ENCODE measurements at regions of chr2 and their contacts with region 1.

Region 1: DNA sequence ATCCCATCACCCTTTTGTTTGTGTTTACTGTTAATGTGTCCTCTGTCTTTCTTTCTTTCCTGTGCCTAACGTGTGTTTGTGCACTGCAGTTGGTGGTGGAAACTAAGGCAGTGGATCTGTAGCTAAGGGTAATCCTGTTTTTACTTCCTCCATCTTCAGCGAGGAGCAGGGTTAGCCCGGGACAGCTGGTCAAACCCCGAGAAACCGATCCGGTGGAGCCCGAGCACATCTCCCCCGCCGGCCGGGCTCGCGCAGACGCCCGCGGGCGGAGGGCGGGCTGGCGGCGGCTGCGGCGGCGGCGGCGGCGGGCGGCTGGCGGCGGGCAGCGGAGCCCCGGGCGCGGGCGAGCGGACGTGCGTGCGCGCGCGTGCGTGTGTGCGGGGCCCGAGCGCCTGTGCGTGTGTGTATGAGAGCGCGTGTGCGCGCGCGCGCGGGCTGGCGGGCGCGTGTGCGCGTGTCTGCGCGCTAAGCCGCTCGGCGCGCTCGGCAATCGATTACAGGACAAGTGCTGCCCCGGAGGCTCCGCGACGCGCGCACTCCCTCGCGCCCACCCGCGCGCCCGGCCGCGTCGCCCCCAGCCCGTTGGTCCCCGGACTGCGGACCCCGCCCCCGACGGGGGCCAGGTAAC is at the start of gene IKZF2:
- DNase-seq: peak; percentile 96
- H3K4me3 ChIP-seq: peak within 1 kb of the TSS; percentile 75
- H3K27ac ChIP-seq: peak within 1 kb of the TSS; percentile 88
- H3K4me1 ChIP-seq: peaks cover 29% of the 10 kb centered on the region
- H3K27me3 ChIP-seq: no peaks in the 10 kb centered on the region
- CTCF ChIP-seq: no peak
- total RNA-seq, gene IKZF2: 68.6 and 69.5 TPM in 2 replicates

Region 2: GRCh38 chr2:212595037-212595654 is 556.4 kb before region 1 on chr2:
- CTCF ChIA-PET with region 1: no interaction called
- POLR2A ChIA-PET with region 1: interaction called, 3 read pairs
- intact Hi-C with region 1: loop called (anchors 2 kb)
- DNase-seq: peak; percentile 50
- H3K4me3 ChIP-seq: no peak overlapping the region
- H3K27ac ChIP-seq: no peak overlapping the region
- H3K4me1 ChIP-seq: peaks cover 9% of the 10 kb centered on the region
- H3K27me3 ChIP-seq: no peaks in the 10 kb centered on the region
- CTCF ChIP-seq: peak; percentile 68

Region 3: GRCh38 chr2:212882626-212883025 is 268.9 kb before region 1 on chr2:
- CTCF ChIA-PET with region 1: no interaction called
- POLR2A ChIA-PET with region 1: no interaction called
- intact Hi-C with region 1: no loop called
- DNase-seq: no peak
- H3K4me3 ChIP-seq: no peak overlapping the region
- H3K27ac ChIP-seq: no peak overlapping the region
- H3K4me1 ChIP-seq: no peaks in the 10 kb centered on the region
- H3K27me3 ChIP-seq: no peaks in the 10 kb centered on the region
- CTCF ChIP-seq: no peak

Region 4: DNA sequence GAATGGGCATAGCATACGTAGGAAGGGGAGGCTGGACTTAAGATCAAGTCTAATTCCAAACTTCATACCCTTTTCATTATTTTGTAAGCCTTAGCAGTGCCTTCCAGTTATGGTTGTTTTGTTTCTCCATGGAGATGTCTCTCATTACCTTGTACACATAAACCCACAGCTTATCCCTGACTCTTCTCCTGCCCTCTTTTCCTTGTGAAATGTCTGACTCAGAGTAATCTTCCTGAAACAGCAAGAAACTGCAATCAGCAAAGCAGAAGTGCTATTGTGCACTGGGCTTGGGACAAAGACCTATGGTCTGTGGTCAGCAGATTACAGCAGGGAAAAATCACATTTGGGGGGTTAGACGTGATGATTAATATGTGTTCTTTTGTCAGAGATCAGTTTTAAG is 176.9 kb before region 1 on chr2:
- CTCF ChIA-PET with region 1: no interaction called
- POLR2A ChIA-PET with region 1: no interaction called
- intact Hi-C with region 1: no loop called
- DNase-seq: no peak
- H3K4me3 ChIP-seq: no peak overlapping the region
- H3K27ac ChIP-seq: no peak overlapping the region
- H3K4me1 ChIP-seq: peaks cover 17% of the 10 kb centered on the region
- H3K27me3 ChIP-seq: no peaks in the 10 kb centered on the region
- CTCF ChIP-seq: no peak

Region 5: DNA sequence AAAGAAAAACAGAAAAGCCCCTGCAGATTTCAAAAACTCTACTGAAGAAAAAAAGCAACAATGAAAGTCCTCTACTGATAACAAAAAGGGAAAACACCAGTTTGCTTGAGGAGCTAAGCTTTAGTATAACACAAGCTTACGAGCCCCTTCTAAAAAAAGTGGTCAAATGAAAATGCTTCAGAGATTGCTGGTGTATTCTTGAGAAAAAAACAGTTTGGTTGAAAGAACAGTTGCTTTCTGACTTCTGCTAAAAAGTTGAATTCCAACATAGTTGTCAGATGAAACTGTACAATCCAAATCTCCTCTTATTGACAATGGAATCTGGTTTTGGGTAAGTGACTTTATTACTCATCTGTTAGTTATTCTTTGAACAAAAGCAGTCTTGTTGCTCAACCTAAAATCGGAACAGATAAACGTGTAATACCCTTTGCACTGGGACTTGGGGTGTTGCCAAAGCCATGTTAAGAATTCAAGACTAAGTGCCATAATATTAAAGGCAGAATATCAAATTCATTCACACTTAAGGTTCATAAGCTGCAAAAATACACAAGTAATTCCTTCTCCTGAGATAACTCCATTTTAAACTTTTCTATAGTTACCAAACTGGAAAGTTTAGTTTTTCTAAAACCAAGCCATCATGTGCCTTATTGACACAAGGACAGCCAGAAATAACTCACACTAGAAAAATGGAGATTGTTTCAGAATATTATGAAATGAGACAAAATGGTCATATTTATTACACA is 87.4 kb after region 1 on chr2:
- CTCF ChIA-PET with region 1: no interaction called
- POLR2A ChIA-PET with region 1: no interaction called
- intact Hi-C with region 1: loop called (anchors 2 kb)
- DNase-seq: peak; percentile 85
- H3K4me3 ChIP-seq: peak overlapping the region; percentile 23
- H3K27ac ChIP-seq: peak overlapping the region; percentile 76
- H3K4me1 ChIP-seq: peaks cover 56% of the 10 kb centered on the region
- H3K27me3 ChIP-seq: no peaks in the 10 kb centered on the region
- CTCF ChIP-seq: no peak

Region 6: GRCh38 chr2:213261771-213262170 is 110.2 kb after region 1 on chr2:
- CTCF ChIA-PET with region 1: no interaction called
- POLR2A ChIA-PET with region 1: no interaction called
- intact Hi-C with region 1: no loop called
- DNase-seq: no peak
- H3K4me3 ChIP-seq: no peak overlapping the region
- H3K27ac ChIP-seq: no peak overlapping the region
- H3K4me1 ChIP-seq: no peaks in the 10 kb centered on the region
- H3K27me3 ChIP-seq: no peaks in the 10 kb centered on the region
- CTCF ChIP-seq: no peak

Region 7: DNA sequence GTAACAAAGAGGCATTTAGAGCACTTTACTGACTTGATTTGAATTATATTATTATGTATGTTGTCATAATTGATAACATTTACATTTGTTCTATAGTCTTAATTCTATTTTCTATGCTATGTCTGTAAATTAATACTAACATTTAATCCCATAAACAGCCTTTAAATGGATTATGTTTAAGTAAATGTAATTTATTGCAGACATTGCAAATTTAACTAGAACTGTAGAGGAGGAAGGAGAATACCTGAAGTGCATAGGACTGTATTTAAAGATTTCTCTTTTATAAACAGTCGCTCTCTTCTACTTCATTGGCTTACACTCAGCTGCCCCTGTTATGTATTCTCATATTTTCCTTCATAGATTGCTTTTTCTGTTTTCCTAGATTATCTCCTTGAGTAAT is 225.1 kb after region 1 on chr2:
- CTCF ChIA-PET with region 1: no interaction called
- POLR2A ChIA-PET with region 1: no interaction called
- intact Hi-C with region 1: no loop called
- DNase-seq: no peak
- H3K4me3 ChIP-seq: no peak overlapping the region
- H3K27ac ChIP-seq: no peak overlapping the region
- H3K4me1 ChIP-seq: no peaks in the 10 kb centered on the region
- H3K27me3 ChIP-seq: no peaks in the 10 kb centered on the region
- CTCF ChIP-seq: no peak